Esophagus muscularis mucosa (tissue), 4 donors: ENCODE measurements at regions of chr12 and their contacts with region 1.

Region 1: GRCh38 chr12:115752913-115753726 is 524.4 kb downstream of the MED13L start:
- DNase-seq: no peak
- H3K4me3 ChIP-seq: no peak overlapping the region
- H3K27ac ChIP-seq: no peak overlapping the region
- H3K4me1 ChIP-seq: peaks cover 0 to 5% (median 0%) of the 10 kb centered on the region in 4 donors
- H3K27me3 ChIP-seq: peaks cover 0 to 39% (median 0%) of the 10 kb centered on the region in 4 donors
- CTCF ChIP-seq: peak; percentile 63 to 66 (median 64)
- EP300 ChIP-seq: no peak
- POLR2A ChIP-seq: no peak

Region 2: DNA sequence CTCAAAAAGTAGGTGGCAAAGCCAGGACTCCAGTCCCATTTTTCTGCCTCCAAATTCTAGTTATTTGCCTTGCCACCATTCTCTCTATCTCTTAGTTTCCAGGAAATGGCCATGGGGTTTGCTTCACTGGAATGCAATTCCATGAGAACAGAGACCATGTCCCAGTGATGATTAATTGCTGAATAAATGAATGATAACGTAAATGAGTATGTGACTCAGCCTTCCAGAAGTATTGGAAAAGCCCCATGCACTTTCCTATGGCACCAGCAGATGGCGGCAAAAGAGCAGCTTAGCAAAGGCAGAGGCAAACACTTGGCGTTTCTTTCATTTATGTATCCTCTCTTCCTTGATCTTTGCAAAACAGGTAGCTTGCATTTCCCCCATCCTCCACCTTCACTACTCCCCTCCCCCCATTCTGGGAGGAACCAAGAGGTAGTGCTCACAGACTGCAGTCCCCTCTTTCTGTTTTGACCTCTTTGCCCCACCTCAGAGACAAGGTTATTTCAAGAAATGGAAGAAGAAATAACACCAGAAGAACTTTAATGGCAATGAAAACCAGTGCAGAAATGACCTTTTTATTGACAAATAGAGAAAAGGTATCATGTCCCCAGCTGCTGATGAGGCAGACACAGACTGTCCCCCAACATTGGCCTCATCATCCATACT is 1090.5 kb before region 1 on chr12:
- intact Hi-C with region 1: loop called (anchors 2 kb)
- DNase-seq: no peak
- H3K4me3 ChIP-seq: no peak overlapping the region
- H3K27ac ChIP-seq: no peak overlapping the region
- H3K4me1 ChIP-seq: peaks cover 0 to 18% (median 13%) of the 10 kb centered on the region in 4 donors
- H3K27me3 ChIP-seq: peaks cover 0 to 79% (median 30%) of the 10 kb centered on the region in 4 donors
- CTCF ChIP-seq: peak; percentile 96
- EP300 ChIP-seq: no peak
- POLR2A ChIP-seq: no peak